Right ventricle myocardium inferior (tissue), 1 donor: ENCODE measurements at regions of chr2 and their contacts with region 1.

Region 1: GRCh38 chr2:181715033-181715630 is 34.8 kb upstream of the NEUROD1 start:
- DNase-seq: no peak
- ATAC-seq: peak; percentile 52

Region 2: GRCh38 chr2:180125245-180125962 is 1589.7 kb before region 1 on chr2:
- intact Hi-C with region 1: loop called (anchors 5 kb)
- DNase-seq: peak; percentile 64
- ATAC-seq: peak; percentile 93

Region 3: DNA sequence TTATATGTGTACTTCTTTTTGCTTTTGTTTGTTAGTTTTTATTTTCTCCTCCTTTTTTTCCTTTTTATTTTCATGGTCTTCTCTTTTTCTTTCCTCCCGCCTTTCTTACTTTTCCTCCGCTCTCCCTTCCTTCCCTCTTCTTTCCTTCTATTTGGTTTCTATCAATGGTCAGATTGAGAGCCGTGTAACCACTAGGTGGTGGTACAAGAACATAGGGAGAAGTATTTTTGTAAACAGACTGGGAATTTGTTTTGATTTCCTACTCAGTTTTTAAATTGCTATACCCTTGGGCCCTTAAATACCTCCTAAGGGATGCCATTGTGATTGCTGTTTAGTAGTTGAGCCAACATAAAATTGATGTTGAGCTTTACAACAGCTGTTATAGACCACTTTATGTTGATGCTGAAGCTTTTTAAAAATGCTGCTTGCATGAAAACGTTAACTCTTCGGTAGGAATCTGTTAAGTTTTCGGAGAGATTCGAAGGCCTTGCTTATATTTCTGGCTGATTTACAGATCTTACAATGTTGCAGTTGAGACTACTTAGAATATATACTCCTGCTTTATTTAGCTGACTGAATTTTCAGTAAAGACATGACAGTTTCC is 610.5 kb before region 1 on chr2:
- intact Hi-C with region 1: loop called (anchors 2 kb)
- DNase-seq: no peak
- ATAC-seq: no peak

Region 4: DNA sequence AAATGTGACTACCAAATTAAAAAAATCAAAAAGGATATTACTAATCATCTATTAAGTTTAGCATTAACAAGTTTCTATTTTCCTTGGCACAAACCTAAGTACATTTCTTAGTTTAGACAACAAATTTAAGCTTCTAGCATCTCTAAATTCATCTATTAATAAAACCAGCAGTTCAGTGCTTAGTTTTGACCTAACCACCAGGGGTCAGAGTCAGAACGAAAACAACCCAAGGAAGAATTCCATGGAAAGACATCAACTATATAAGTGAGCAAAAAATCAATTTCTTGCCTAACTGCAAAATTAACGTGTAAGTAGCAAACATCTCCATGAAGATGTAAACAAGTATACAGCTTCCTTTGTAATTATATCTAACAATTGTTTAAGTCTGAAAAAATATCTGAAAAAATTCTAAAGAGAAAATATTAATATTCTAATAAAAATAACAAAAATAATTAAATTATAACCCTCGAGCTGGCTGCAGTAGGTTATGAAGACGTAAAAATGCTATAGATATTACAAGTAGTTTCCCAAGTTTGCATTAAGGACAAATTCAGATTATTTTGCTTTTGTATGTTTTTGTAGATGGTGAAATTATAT is 141.9 kb before region 1 on chr2:
- intact Hi-C with region 1: loop called (anchors 2 kb)
- DNase-seq: no peak
- ATAC-seq: no peak

Region 5: GRCh38 chr2:181916726-181917718 is 201.9 kb after region 1 on chr2:
- intact Hi-C with region 1: no loop called
- DNase-seq: no peak
- ATAC-seq: no peak